Tibial artery (tissue), 4 donors: ENCODE measurements at regions of chr1 and their contacts with region 1.

Region 1: DNA sequence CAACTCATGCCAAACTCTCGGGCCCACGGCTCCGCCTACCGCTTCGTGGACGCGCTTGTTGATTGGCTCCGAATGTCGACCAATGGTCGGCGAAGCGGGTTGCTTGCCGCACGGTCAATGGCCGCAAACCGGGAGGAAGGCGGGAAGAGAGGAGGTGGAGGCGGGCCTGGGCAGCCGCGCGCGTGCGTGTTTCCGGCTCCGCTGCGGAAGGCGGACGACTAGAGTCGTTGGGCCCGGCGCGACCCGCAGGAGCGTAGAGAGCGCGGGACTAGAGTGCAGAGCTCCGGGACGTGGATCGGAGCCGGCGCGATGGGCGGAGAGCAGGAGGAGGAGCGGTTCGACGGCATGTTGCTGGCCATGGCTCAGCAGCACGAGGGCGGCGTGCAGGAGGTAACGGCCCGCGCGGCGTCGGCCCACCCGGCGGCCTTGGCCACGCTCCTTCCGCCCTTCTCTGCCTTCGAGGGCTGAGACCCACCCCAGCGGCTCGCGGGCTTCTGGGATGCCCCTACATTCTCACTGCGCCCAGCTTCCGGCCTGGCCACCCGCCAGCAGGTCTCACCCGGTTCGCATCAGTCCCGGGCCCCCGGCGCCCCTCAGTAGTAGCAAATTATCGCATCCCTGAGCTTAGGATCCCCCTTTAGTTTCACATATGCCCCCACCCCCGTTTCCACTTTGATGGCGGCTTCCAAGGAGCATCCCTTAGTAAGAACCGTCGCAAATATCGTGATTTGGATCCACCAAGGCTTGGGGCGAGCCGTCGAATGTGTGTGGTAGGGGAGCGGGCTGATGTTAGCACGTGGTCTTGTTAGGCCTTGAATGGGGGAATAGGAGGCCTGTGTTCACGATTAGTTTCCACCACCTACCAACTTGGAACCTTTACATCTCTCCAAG is at the start of gene NUDC:
- DNase-seq: peak; percentile 96 to 98
- H3K4me3 ChIP-seq: peak within 1 kb of the TSS; percentile 91 to 95
- H3K27ac ChIP-seq: peak within 1 kb of the TSS; percentile 91 to 92
- H3K4me1 ChIP-seq: peaks cover 0 to 18% (median 16%) of the 10 kb centered on the region in 4 donors
- H3K27me3 ChIP-seq: no peaks in the 10 kb centered on the region
- CTCF ChIP-seq: no peak

Region 2: GRCh38 chr1:26900001-26900814 is 21.6 kb before region 1 on chr1 and contains the start of gene GPATCH3:
- intact Hi-C with region 1: loop called (anchors 2 kb)
- DNase-seq: peak; percentile 93 to 96
- H3K4me3 ChIP-seq: peak within 1 kb of the TSS; percentile 78 to 80
- H3K27ac ChIP-seq: peak within 1 kb of the TSS; percentile 71 to 75
- H3K4me1 ChIP-seq: peaks cover 0 to 19% (median 18%) of the 10 kb centered on the region in 4 donors
- H3K27me3 ChIP-seq: no peaks in the 10 kb centered on the region
- CTCF ChIP-seq: no peak